Natural killer cell (primary cell): ENCODE measurements at regions of chr13 and their contacts with region 1.

Region 1: GRCh38 chr13:100235311-100235901 is 146.5 kb downstream of the PCCA start:
- DNase-seq: peak in 1 of 2 donors; percentile 70
- ATAC-seq: no peak
- H3K4me3 ChIP-seq: no peak overlapping the region
- H3K4me3 Mint-ChIP-seq: peak overlapping the region; percentile 8
- H3K27ac ChIP-seq: no peak overlapping the region
- H3K27ac Mint-ChIP-seq: no peak overlapping the region
- H3K4me1 ChIP-seq: no peaks in the 10 kb centered on the region
- H3K4me1 Mint-ChIP-seq: peaks cover 7 to 8% of the 10 kb centered on the region in 2 donors
- H3K27me3 ChIP-seq: no peaks in the 10 kb centered on the region
- H3K27me3 Mint-ChIP-seq: no peaks in the 10 kb centered on the region
- CTCF ChIP-seq: peak; percentile 46

Region 2: GRCh38 chr13:99916366-99917103 is 318.9 kb before region 1 on chr13:
- intact Hi-C with region 1: loop called (anchors 1 kb)
- DNase-seq: peak in 1 of 2 donors; percentile 76
- ATAC-seq: peak; percentile 62 to 87 (median 64)
- H3K4me3 ChIP-seq: no peak overlapping the region
- H3K4me3 Mint-ChIP-seq: no peak overlapping the region
- H3K27ac ChIP-seq: no peak overlapping the region
- H3K27ac Mint-ChIP-seq: no peak overlapping the region
- H3K4me1 ChIP-seq: peaks cover 6% of the 10 kb centered on the region
- H3K4me1 Mint-ChIP-seq: peaks cover 0 to 6% of the 10 kb centered on the region in 2 donors
- H3K27me3 ChIP-seq: no peaks in the 10 kb centered on the region
- H3K27me3 Mint-ChIP-seq: peaks cover 28 to 39% of the 10 kb centered on the region in 2 donors
- CTCF ChIP-seq: peak; percentile 72

Region 3: DNA sequence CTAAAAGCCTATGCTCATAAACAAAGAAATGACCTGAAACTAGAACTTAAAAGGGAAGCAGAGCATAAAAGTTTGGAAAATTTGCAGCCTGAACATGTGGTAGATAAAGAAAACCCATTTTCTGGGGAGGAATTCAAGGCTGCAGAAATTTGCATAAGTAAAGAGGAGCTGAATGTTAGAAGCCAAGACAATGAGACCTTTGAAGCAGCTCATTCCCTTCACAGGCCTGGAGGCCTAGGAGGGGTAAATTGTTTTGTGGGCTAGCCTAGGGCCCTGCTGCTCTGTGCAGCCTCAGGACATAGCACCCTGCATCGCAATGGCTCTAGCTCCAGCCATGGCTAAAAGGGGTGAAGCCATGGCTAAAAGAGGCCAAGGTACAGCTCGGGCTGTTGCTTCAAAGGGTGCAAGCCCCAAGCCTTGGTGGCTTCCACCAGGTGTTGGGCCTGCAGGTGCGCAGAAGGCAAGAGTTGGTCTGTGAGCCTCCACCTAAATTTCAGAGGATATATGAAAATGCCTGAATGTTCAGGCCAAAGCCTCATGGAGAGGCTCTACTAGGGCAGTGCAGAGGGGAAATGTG is 215.5 kb before region 1 on chr13:
- intact Hi-C with region 1: no loop called
- DNase-seq: no peak
- ATAC-seq: no peak
- H3K4me3 ChIP-seq: no peak overlapping the region
- H3K4me3 Mint-ChIP-seq: no peak overlapping the region
- H3K27ac ChIP-seq: no peak overlapping the region
- H3K27ac Mint-ChIP-seq: no peak overlapping the region
- H3K4me1 ChIP-seq: no peaks in the 10 kb centered on the region
- H3K4me1 Mint-ChIP-seq: no peaks in the 10 kb centered on the region
- H3K27me3 ChIP-seq: no peaks in the 10 kb centered on the region
- H3K27me3 Mint-ChIP-seq: peaks cover 13% of the 10 kb centered on the region in 2 donors
- CTCF ChIP-seq: no peak

Region 4: GRCh38 chr13:100063333-100063732 is 172.1 kb before region 1 on chr13:
- intact Hi-C with region 1: no loop called
- DNase-seq: no peak
- ATAC-seq: no peak
- H3K4me3 ChIP-seq: no peak overlapping the region
- H3K4me3 Mint-ChIP-seq: no peak overlapping the region
- H3K27ac ChIP-seq: no peak overlapping the region
- H3K27ac Mint-ChIP-seq: no peak overlapping the region
- H3K4me1 ChIP-seq: no peaks in the 10 kb centered on the region
- H3K4me1 Mint-ChIP-seq: peaks cover 0 to 6% of the 10 kb centered on the region in 2 donors
- H3K27me3 ChIP-seq: peaks cover 4% of the 10 kb centered on the region
- H3K27me3 Mint-ChIP-seq: peaks cover 18 to 36% of the 10 kb centered on the region in 2 donors
- CTCF ChIP-seq: no peak